ENCODE measurements at regions of chr10 and their contacts with region 1.

Region 1: DNA sequence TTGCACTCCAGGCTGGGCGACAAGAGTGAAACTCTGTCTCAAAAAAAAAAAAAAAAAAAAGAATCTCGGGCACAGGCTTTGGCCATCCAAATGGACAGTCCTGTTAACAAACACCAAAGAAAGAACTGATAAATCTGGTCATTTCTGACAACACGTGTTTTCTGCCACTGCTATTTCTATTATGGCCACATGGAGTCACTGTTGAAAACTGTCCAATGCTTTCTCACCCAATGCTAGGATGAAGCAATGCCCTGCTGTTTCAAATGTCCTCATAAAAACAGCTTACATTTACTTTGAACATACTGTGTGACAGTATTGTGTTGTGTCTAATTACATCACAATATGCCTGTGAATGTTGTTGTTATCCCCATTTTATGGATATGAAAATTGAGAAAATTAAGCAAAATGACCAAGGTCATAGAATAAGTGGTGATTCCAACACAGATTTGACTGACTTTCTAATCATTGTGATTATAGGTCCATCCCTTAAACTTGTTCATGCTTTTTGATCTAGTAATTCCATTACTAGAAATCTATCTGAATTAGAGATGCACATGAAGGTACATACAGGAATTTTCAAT is 19.9 kb upstream of the MAP3K8 start:
- DNase-seq: no peak
- ATAC-seq: peak; percentile 94
- H3K4me3 ChIP-seq: no peak overlapping the region
- H3K27ac ChIP-seq: no peak overlapping the region
- H3K4me1 ChIP-seq: peaks cover 16% of the 10 kb centered on the region
- H3K27me3 ChIP-seq: no peaks in the 10 kb centered on the region
- CTCF ChIP-seq: peak; percentile 75

Region 2: GRCh38 chr10:30324448-30325110 is 89.5 kb before region 1 on chr10:
- intact Hi-C with region 1: no loop called
- DNase-seq: no peak
- ATAC-seq: no peak
- H3K4me3 ChIP-seq: no peak overlapping the region
- H3K27ac ChIP-seq: no peak overlapping the region
- H3K4me1 ChIP-seq: no peaks in the 10 kb centered on the region
- H3K27me3 ChIP-seq: no peaks in the 10 kb centered on the region
- CTCF ChIP-seq: no peak

Region 3: DNA sequence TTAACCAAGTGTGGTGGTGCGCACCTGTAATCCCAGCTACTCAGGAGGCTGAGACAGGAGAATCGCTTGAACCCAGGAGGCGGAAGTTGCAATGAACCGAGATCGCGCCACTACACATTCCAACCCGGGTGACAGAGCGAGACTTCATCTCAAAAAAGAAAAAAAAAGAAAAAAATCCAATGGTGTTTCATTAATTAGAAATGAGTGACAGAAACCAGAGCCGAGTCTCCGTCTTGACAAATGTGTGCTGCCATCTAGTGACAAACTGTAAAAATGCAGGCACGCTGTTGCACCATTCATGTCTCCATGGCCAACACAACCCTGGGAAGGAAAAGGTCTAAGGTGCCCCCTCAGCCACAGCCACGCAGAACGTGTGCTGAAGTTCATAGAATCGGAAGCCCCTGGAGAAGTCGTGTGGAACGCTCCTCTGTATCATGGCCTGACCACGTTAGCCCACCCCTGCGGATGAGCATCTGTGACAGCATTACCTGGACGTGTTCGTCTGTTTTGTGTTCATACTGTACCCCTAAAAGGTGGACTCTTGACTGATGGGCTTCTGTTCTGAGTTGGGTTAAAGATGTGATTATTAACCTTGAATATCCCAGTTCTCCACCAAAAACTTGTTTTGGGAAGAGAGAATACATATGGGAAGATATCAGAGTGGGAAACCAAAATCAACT is 120.5 kb after region 1 on chr10:
- intact Hi-C with region 1: loop called (anchors 10 kb)
- DNase-seq: no peak
- ATAC-seq: peak; percentile 87
- H3K4me3 ChIP-seq: no peak overlapping the region
- H3K27ac ChIP-seq: no peak overlapping the region
- H3K4me1 ChIP-seq: peaks cover 21% of the 10 kb centered on the region
- H3K27me3 ChIP-seq: no peaks in the 10 kb centered on the region
- CTCF ChIP-seq: peak; percentile 91

Measured in upper lobe of right lung (tissue), 1 donor.